A549 (cell line): ENCODE measurements at regions of chr12 and their contacts with region 1.

Region 1: GRCh38 chr12:121590476-121591143 is 9.8 kb upstream of the KDM2B start:
- DNase-seq: no peak
- ATAC-seq: peak; percentile 30 to 40; a peak in 3 of 6 replicates
- H3K4me3 ChIP-seq: no peak overlapping the region; the same call in 2 of the 3 replicates
- H3K27ac ChIP-seq: peak overlapping the region; percentile 38 to 85; a peak in 4 of 6 replicates
- H3K4me1 ChIP-seq: peaks cover 5% of the 10 kb centered on the region; the same call in 1 of the 3 replicates
- CTCF ChIP-seq: no peak
- EP300 ChIP-seq: no peak
- POLR2A ChIP-seq: no peak
- RAD21 ChIP-seq: no peak

Region 2: GRCh38 chr12:121600702-121601336 is 10.2 kb after region 1 on chr12:
- CTCF ChIA-PET with region 1: interaction called, 13 read pairs
- POLR2A ChIA-PET with region 1: no interaction called
- DNase-seq: no peak
- ATAC-seq: no peak
- H3K4me3 ChIP-seq: no peak overlapping the region
- H3K27ac ChIP-seq: no peak overlapping the region
- H3K4me1 ChIP-seq: peaks cover 7% of the 10 kb centered on the region; the same call in 2 of the 3 replicates
- CTCF ChIP-seq: no peak
- EP300 ChIP-seq: no peak
- POLR2A ChIP-seq: no peak
- RAD21 ChIP-seq: no peak